ENCODE measurements at regions of chr11 and their contacts with region 1.

Region 1: DNA sequence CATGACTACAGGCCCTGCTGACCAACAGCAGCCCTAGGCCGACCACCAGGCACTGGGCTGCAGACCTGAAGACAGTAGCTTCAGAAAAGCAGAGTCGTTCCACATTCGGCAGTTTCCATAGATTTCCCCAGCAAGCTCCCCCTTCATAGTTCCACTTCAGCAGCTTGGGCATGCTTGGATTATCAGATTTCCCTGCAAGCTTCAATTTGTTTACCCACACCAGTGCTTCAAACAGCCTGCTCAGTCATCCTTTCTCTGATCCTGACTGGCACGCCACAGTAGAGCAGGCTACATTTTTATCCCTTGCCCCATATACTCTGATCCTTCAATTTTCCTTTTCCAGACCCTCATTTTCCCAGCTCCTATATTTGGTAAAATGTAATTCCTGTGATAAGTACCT is 51.1 kb upstream of the CFAP300 start:
- DNase-seq: no peak
- H3K4me3 ChIP-seq: no peak overlapping the region
- H3K27ac ChIP-seq: no peak overlapping the region
- H3K4me1 ChIP-seq: no peaks in the 10 kb centered on the region
- H3K27me3 ChIP-seq: no peaks in the 10 kb centered on the region
- CTCF ChIP-seq: no peak
- POLR2A ChIP-seq: no peak

Region 2: GRCh38 chr11:101894505-101894904 is 101.6 kb before region 1 on chr11:
- intact Hi-C with region 1: loop called (anchors 5 kb)
- DNase-seq: no peak
- H3K4me3 ChIP-seq: no peak overlapping the region
- H3K27ac ChIP-seq: no peak overlapping the region
- H3K4me1 ChIP-seq: no peaks in the 10 kb centered on the region
- H3K27me3 ChIP-seq: no peaks in the 10 kb centered on the region
- CTCF ChIP-seq: no peak
- POLR2A ChIP-seq: no peak